ENCODE measurements at regions of chr5 and their contacts with region 1.

Region 1: GRCh38 chr5:116176124-116176523 is 91.3 kb downstream of the COMMD10 start:
- DNase-seq: no peak
- H3K27ac ChIP-seq: no peak overlapping the region
- CTCF ChIP-seq: no peak

Region 2: DNA sequence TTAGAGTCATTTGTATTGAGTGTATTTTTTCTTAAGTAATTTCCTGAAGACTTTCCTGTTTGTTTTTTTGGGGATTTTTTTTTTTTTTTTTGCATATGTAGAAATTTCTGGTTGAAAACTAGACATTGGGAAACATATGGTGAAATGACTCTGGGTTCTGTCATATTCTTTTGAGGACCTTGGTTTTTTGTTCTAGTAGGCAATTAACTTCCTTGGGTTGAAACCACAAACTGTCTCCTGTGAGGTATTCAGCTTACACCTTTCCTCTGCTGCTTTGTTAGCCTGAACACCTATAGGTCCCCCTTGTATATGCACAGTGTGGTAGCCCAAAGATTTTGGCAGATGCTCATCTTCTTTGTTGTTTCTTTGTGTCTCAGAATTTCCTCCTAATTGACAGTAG is 49.2 kb after region 1 on chr5:
- CTCF ChIA-PET with region 1: no interaction called
- POLR2A ChIA-PET with region 1: no interaction called
- DNase-seq: no peak
- H3K27ac ChIP-seq: no peak overlapping the region
- CTCF ChIP-seq: no peak

Region 3: GRCh38 chr5:116982035-116982434 is 805.9 kb after region 1 on chr5:
- CTCF ChIA-PET with region 1: no interaction called
- POLR2A ChIA-PET with region 1: interaction called, 11 read pairs
- DNase-seq: no peak
- H3K27ac ChIP-seq: no peak overlapping the region
- CTCF ChIP-seq: no peak

Measured in RWPE1 (cell line).